ENCODE measurements at regions of chr3 and their contacts with region 1.

Region 1: DNA sequence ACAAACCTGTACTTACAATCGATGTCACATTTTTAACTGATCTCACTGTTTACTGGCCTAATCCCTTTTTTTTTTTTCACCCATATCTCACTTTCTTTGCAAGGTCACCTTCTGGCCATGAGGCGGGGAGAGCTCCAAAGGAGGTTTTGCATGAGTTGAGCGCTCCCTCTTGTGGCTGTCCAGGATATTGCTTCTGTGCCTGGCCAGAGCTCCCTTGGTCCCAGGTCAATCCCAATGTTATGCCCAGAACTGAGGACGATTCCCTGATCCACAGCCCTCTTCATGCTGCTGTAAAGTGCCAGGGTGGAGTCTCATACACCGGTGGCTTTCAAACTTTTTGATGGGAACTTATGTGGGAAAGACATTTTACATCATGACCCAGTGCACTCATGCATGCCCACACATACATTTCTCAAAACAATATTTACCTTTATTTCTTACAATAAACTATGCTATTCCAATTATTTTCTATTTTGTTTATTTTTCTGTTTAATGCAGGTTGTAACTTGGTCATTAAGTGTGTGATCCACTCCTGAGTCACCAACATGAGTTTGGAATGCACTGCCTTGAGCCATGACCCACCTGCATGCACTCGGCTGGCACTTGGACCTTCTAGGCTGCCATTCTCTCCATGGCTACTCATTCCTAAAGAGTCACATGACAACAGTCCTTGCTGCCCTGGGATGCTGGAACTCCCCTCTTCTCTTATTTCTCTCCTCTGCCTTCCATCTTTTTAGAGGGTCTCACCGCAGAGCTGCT is 9.6 kb upstream of the SST start:
- DNase-seq: peak; percentile 78
- ATAC-seq: peak; percentile 70
- H3K4me3 Mint-ChIP-seq: no peak overlapping the region
- H3K27ac Mint-ChIP-seq: no peak overlapping the region
- H3K4me1 Mint-ChIP-seq: peaks cover 7% of the 10 kb centered on the region
- H3K27me3 Mint-ChIP-seq: peaks cover 30% of the 10 kb centered on the region
- CTCF ChIP-seq: peak; percentile 88

Region 2: GRCh38 chr3:187227658-187228258 is 452.1 kb before region 1 on chr3:
- CTCF ChIA-PET with region 1: interaction called, 16 read pairs
- POLR2A ChIA-PET with region 1: no interaction called
- intact Hi-C with region 1: loop called (anchors 10 kb)
- DNase-seq: no peak
- ATAC-seq: no peak
- H3K4me3 Mint-ChIP-seq: no peak overlapping the region
- H3K27ac Mint-ChIP-seq: no peak overlapping the region
- H3K4me1 Mint-ChIP-seq: no peaks in the 10 kb centered on the region
- H3K27me3 Mint-ChIP-seq: peaks cover 5% of the 10 kb centered on the region
- CTCF ChIP-seq: no peak

Region 3: GRCh38 chr3:187587076-187587475 is 92.7 kb before region 1 on chr3:
- CTCF ChIA-PET with region 1: no interaction called
- POLR2A ChIA-PET with region 1: no interaction called
- intact Hi-C with region 1: no loop called
- DNase-seq: no peak
- ATAC-seq: no peak
- H3K4me3 Mint-ChIP-seq: no peak overlapping the region
- H3K27ac Mint-ChIP-seq: no peak overlapping the region
- H3K4me1 Mint-ChIP-seq: no peaks in the 10 kb centered on the region
- H3K27me3 Mint-ChIP-seq: peaks cover 28% of the 10 kb centered on the region
- CTCF ChIP-seq: no peak

Region 4: DNA sequence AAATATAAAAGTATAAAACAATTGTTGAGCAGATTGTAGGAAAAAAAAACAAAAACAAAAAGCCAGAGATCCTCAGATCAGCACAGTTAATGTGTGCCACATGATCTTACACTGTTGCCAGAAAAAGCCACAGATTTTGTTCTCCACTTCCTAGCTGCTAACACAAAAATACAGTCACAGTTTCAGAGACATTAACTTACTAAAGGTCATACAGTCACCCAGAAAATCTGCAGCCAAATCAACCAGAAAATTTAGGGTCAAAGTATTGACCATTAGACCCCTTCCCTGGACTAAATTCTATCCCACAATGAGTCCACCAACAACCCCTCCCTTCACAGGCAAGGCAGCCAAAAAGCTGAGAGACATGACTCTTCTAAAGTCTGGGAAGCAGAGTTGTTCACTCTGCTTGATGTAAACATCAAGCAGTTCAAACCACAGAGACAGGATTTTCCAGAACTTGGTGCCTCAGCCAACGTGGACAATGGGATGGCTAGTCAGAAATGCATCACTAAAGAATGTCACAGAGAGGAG is 68.8 kb before region 1 on chr3:
- CTCF ChIA-PET with region 1: interaction called, 89 read pairs
- POLR2A ChIA-PET with region 1: interaction called, 3 read pairs
- intact Hi-C with region 1: loop called (anchors 5 kb)
- DNase-seq: no peak
- ATAC-seq: no peak
- H3K4me3 Mint-ChIP-seq: no peak overlapping the region
- H3K27ac Mint-ChIP-seq: no peak overlapping the region
- H3K4me1 Mint-ChIP-seq: peaks cover 1% of the 10 kb centered on the region
- H3K27me3 Mint-ChIP-seq: peaks cover 34% of the 10 kb centered on the region
- CTCF ChIP-seq: no peak

Region 5: DNA sequence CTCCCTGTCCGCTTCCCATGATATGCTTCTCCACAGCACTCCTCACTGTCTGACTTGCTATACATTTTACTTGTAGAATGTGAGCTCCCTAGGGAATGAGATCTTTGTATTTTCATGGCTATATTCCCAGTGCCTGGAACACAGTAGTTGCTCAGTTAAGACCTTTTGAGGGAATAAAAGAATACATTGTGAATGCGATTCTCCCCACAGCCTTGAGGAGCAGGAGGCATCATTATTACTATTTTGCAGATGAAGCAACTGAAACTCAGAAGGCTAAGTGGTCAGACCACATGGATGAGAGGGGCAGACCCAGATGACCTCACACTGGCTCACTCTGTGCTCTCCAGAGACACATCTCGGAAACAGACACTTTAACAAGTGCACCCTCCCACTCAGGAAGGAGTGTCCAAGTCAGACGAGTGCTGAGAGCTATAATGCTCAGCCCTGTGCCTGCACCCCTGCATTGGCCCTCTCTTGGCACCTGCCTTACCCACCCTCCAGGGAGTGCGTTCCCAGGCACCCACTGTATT is 56.5 kb before region 1 on chr3:
- CTCF ChIA-PET with region 1: interaction called, 13 read pairs
- POLR2A ChIA-PET with region 1: no interaction called
- intact Hi-C with region 1: loop called (anchors 5 kb)
- DNase-seq: no peak
- ATAC-seq: no peak
- H3K4me3 Mint-ChIP-seq: no peak overlapping the region
- H3K27ac Mint-ChIP-seq: no peak overlapping the region
- H3K4me1 Mint-ChIP-seq: no peaks in the 10 kb centered on the region
- H3K27me3 Mint-ChIP-seq: peaks cover 7% of the 10 kb centered on the region
- CTCF ChIP-seq: no peak

Region 6: GRCh38 chr3:187648177-187648576 is 31.6 kb before region 1 on chr3:
- CTCF ChIA-PET with region 1: interaction called, 12 read pairs
- POLR2A ChIA-PET with region 1: no interaction called
- intact Hi-C with region 1: no loop called
- DNase-seq: no peak
- ATAC-seq: no peak
- H3K4me3 Mint-ChIP-seq: no peak overlapping the region
- H3K27ac Mint-ChIP-seq: no peak overlapping the region
- H3K4me1 Mint-ChIP-seq: no peaks in the 10 kb centered on the region
- H3K27me3 Mint-ChIP-seq: peaks cover 26% of the 10 kb centered on the region
- CTCF ChIP-seq: no peak

Region 7: GRCh38 chr3:187689984-187690383 is 10.2 kb after region 1 on chr3:
- CTCF ChIA-PET with region 1: interaction called, 21 read pairs
- POLR2A ChIA-PET with region 1: no interaction called
- intact Hi-C with region 1: no loop called
- DNase-seq: no peak
- ATAC-seq: peak; percentile 30
- H3K4me3 Mint-ChIP-seq: no peak overlapping the region
- H3K27ac Mint-ChIP-seq: no peak overlapping the region
- H3K4me1 Mint-ChIP-seq: no peaks in the 10 kb centered on the region
- H3K27me3 Mint-ChIP-seq: peaks cover 19% of the 10 kb centered on the region
- CTCF ChIP-seq: no peak

Region 8: GRCh38 chr3:187714404-187714979 is 34.7 kb after region 1 on chr3:
- CTCF ChIA-PET with region 1: interaction called, 87 read pairs
- POLR2A ChIA-PET with region 1: no interaction called
- intact Hi-C with region 1: no loop called
- DNase-seq: peak; percentile 85
- ATAC-seq: peak; percentile 95
- H3K4me3 Mint-ChIP-seq: no peak overlapping the region
- H3K27ac Mint-ChIP-seq: no peak overlapping the region
- H3K4me1 Mint-ChIP-seq: peaks cover 9% of the 10 kb centered on the region
- H3K27me3 Mint-ChIP-seq: no peaks in the 10 kb centered on the region
- CTCF ChIP-seq: peak; percentile 90

Region 9: GRCh38 chr3:188230962-188231361 is 551.1 kb after region 1 on chr3:
- CTCF ChIA-PET with region 1: no interaction called
- POLR2A ChIA-PET with region 1: no interaction called
- intact Hi-C with region 1: no loop called
- DNase-seq: no peak
- ATAC-seq: peak; percentile 30
- H3K4me3 Mint-ChIP-seq: no peak overlapping the region
- H3K27ac Mint-ChIP-seq: no peak overlapping the region
- H3K4me1 Mint-ChIP-seq: peaks cover 2% of the 10 kb centered on the region
- H3K27me3 Mint-ChIP-seq: no peaks in the 10 kb centered on the region
- CTCF ChIP-seq: no peak

Measured in activated CD8-positive, alpha-beta T cell treated with anti-CD3 and anti-CD28 coated beads for 36 hours (primary cell).